ENCODE measurements at regions of chr7 and their contacts with region 1.

Region 1: DNA sequence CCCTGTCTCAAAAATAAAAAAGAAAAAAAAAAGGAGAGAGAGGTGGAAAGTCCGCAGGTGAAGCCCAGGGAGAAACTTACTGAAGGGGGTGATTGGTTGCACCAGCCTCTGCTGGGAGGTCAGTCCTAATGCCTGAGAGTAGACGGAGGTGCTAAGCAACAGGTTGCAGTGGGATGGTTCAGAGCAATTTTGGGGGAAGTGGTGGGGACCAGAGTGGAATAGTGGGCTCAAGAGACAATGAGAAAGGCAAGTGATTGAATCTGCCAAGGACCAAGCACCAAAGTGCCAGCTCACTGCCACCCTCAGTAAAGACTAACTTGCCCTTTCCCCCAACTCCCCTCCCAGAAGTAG is 90.2 kb upstream of the GTF2I start:
- DNase-seq: no peak
- H3K4me3 Mint-ChIP-seq: no peak overlapping the region
- H3K27ac Mint-ChIP-seq: peak overlapping the region; percentile 31
- H3K4me1 Mint-ChIP-seq: peaks cover 16% of the 10 kb centered on the region
- H3K27me3 Mint-ChIP-seq: no peaks in the 10 kb centered on the region

Region 2: GRCh38 chr7:74554178-74554577 is 13.1 kb before region 1 on chr7:
- CTCF ChIA-PET with region 1: interaction called, 18 read pairs
- POLR2A ChIA-PET with region 1: no interaction called
- DNase-seq: no peak
- H3K4me3 Mint-ChIP-seq: no peak overlapping the region
- H3K27ac Mint-ChIP-seq: no peak overlapping the region
- H3K4me1 Mint-ChIP-seq: no peaks in the 10 kb centered on the region
- H3K27me3 Mint-ChIP-seq: no peaks in the 10 kb centered on the region

Region 3: GRCh38 chr7:74579800-74580685 is 12.8 kb after region 1 on chr7:
- CTCF ChIA-PET with region 1: interaction called, 14 read pairs
- POLR2A ChIA-PET with region 1: no interaction called
- DNase-seq: no peak
- H3K4me3 Mint-ChIP-seq: no peak overlapping the region
- H3K27ac Mint-ChIP-seq: no peak overlapping the region
- H3K4me1 Mint-ChIP-seq: no peaks in the 10 kb centered on the region
- H3K27me3 Mint-ChIP-seq: no peaks in the 10 kb centered on the region

Measured in activated CD4-positive, alpha-beta T cell treated with anti-CD3 and anti-CD28 coated beads, Interleukin-2, amount 10 ng/mL, durations not matched to agents 7 days and 5 days (primary cell).